HAP-1 (cell line): ENCODE measurements at regions of chr6 and their contacts with region 1.

Region 1: DNA sequence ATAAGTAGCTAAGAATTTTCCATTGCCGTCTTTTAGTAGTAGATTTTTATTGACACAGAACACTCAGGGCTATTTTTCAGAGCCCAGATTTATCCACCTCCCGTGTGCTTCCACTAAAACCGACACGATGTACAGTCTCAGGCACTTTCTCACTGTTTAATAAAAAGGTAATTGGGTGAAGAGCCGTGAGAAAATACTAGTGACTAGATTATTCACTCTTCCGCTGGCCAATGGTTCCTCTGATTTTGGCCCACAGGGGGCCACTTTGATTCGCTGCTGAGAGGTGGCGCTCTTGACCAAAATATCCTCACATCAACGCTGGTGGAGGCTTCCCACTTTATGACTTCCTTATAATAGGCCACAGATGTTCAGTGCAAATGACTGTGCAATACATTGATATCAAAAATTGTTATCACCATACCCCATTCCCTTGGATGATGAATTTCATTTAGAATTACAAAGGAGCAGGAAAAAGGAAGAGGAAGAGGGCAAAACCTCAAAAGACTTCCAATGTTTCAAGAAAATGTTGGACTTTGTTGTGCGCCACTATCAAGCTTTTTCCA is 12.3 kb upstream of the HDDC2 start:
- DNase-seq: peak; percentile 63 to 72
- H3K4me3 ChIP-seq: no peak overlapping the region
- H3K4me1 ChIP-seq: no peaks in the 10 kb centered on the region
- H3K27me3 ChIP-seq: peaks cover 15% of the 10 kb centered on the region

Region 2: GRCh38 chr6:125251516-125252220 is 62.4 kb before region 1 on chr6:
- in situ Hi-C with region 1: no loop called
- DNase-seq: no peak
- H3K4me3 ChIP-seq: no peak overlapping the region
- H3K4me1 ChIP-seq: peaks cover 18% of the 10 kb centered on the region
- H3K27me3 ChIP-seq: no peaks in the 10 kb centered on the region

Region 3: GRCh38 chr6:125765944-125766343 is 451.8 kb after region 1 on chr6:
- in situ Hi-C with region 1: loop called (anchors 5 kb)
- DNase-seq: no peak
- H3K4me3 ChIP-seq: no peak overlapping the region
- H3K4me1 ChIP-seq: 0 out of 2 replicates have a peak, but pooled peaks cover 2% of the 10 kb centered on the region
- H3K27me3 ChIP-seq: peaks cover 16% of the 10 kb centered on the region; the same call in 1 of the 2 replicates

Region 4: GRCh38 chr6:125974214-125974866 is 660.2 kb after region 1 on chr6:
- in situ Hi-C with region 1: loop called (anchors 10 kb)
- DNase-seq: peak in 1 of 2 experiments; percentile 54
- H3K4me3 ChIP-seq: no peak overlapping the region
- H3K4me1 ChIP-seq: no peaks in the 10 kb centered on the region
- H3K27me3 ChIP-seq: no peaks in the 10 kb centered on the region